ENCODE measurements at regions of chr3 and their contacts with region 1.

Region 1: DNA sequence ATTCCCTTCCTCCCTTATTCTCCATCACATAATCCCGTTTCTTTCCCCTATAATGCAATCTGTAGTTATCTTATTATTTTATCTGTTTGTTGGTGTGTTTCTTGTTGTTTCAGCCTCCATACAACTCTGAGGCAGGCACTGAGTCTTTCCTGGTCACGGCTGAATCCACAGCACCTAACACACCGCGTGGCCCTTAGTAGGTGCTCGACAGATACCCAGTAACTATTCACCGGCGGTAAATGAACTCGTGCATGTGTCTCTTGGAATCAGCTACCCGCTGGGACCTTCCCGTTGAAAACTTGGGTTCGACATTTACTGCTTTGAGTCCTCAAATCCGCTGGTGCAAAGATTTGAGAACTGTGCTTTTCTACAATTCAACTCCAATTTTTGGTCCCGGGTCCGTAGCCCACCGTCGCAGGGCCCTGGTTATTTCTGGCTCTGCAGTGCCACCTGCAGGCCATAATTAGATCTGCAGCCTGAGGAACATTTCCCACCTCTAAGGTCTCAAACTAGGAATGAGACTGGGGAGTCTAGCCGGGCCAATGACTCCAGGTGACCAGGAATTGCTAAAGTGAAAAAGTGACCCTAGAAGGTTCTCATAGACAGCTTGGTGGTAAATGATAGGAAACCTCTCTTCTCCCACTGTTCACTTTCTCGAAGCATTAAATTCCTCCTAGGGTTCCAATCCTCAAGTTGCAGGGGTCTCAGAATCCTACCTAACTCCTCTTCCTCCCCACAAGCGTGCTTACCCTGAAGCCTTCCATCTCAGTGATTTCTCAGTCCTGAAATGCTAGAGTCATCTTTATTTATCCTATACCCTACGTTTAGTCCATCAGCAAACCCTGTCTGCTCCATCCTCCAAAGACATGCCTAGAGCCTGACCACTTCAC is 40.0 kb upstream of the TRH start:
- DNase-seq: no peak
- H3K4me3 ChIP-seq: no peak overlapping the region; the same call in 1 of the 2 replicates
- CTCF ChIP-seq: peak; percentile 71

Region 2: GRCh38 chr3:129627429-129628168 is 306.9 kb before region 1 on chr3:
- CTCF ChIA-PET with region 1: interaction called, 26 read pairs
- POLR2A ChIA-PET with region 1: no interaction called
- DNase-seq: no peak
- H3K4me3 ChIP-seq: peak overlapping the region; percentile 50
- CTCF ChIP-seq: peak; percentile 75

Region 3: GRCh38 chr3:129650256-129650872 is 284.1 kb before region 1 on chr3:
- CTCF ChIA-PET with region 1: interaction called, 38 read pairs
- POLR2A ChIA-PET with region 1: no interaction called
- DNase-seq: peak; percentile 61
- H3K4me3 ChIP-seq: no peak overlapping the region
- CTCF ChIP-seq: peak; percentile 67

Region 4: GRCh38 chr3:129831503-129831902 is 103.0 kb before region 1 on chr3:
- CTCF ChIA-PET with region 1: interaction called, 13 read pairs
- POLR2A ChIA-PET with region 1: no interaction called
- DNase-seq: no peak
- H3K4me3 ChIP-seq: no peak overlapping the region
- CTCF ChIP-seq: no peak

Region 5: GRCh38 chr3:129911261-129911861 is 23.1 kb before region 1 on chr3:
- CTCF ChIA-PET with region 1: interaction called, 12 read pairs
- POLR2A ChIA-PET with region 1: no interaction called
- DNase-seq: no peak
- H3K4me3 ChIP-seq: no peak overlapping the region
- CTCF ChIP-seq: no peak

Measured in AG04449 (cell line).